Pancreas (tissue), 10 donors: ENCODE measurements at regions of chr3 and their contacts with region 1.

Region 1: GRCh38 chr3:155173386-155174170 is 93.5 kb downstream of the MME start:
- DNase-seq: no peak
- ATAC-seq: no peak
- H3K4me3 ChIP-seq: no peak overlapping the region
- H3K27ac ChIP-seq: no peak overlapping the region
- H3K4me1 ChIP-seq: no peaks in the 10 kb centered on the region
- H3K27me3 ChIP-seq: no peaks in the 10 kb centered on the region
- CTCF ChIP-seq: no peak

Region 2: GRCh38 chr3:154919226-154919625 is 254.4 kb before region 1 on chr3:
- intact Hi-C with region 1: no loop called
- DNase-seq: no peak
- ATAC-seq: no peak
- H3K4me3 ChIP-seq: no peak overlapping the region
- H3K27ac ChIP-seq: no peak overlapping the region
- H3K4me1 ChIP-seq: no peaks in the 10 kb centered on the region
- H3K27me3 ChIP-seq: no peaks in the 10 kb centered on the region
- CTCF ChIP-seq: no peak

Region 3: DNA sequence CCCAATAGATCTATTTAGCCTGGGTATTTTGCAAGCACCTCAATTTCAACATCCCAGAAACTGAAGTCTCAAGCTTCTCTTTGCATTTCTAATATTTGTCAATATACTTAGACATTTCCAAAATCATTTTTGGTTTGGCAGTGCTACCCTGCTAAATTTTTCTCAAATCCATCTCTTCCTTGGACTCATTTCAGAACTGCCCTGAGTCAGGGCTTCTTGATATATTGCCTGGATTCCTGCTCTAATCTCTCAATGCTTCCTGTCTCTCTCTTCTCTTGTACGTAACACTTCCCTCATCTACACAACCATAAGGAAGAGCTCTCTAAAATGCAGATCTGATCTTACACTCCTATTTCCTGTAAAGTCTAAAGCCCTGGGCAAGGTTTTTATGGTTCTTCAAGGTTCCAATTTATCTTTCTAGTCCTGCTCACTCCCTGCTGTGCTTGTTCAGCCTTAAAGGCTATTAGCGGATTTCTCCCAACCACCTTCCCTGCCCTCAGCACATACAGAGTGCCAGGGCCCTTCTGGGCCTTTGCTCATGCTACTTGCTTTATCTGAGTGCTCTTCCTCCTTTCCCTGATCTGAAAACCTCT is 146.5 kb before region 1 on chr3:
- intact Hi-C with region 1: no loop called
- DNase-seq: no peak
- ATAC-seq: peak in 1 of 4 donors; percentile 40
- H3K4me3 ChIP-seq: no peak overlapping the region
- H3K27ac ChIP-seq: no peak overlapping the region
- H3K4me1 ChIP-seq: no peaks in the 10 kb centered on the region
- H3K27me3 ChIP-seq: no peaks in the 10 kb centered on the region
- CTCF ChIP-seq: no peak

Region 4: DNA sequence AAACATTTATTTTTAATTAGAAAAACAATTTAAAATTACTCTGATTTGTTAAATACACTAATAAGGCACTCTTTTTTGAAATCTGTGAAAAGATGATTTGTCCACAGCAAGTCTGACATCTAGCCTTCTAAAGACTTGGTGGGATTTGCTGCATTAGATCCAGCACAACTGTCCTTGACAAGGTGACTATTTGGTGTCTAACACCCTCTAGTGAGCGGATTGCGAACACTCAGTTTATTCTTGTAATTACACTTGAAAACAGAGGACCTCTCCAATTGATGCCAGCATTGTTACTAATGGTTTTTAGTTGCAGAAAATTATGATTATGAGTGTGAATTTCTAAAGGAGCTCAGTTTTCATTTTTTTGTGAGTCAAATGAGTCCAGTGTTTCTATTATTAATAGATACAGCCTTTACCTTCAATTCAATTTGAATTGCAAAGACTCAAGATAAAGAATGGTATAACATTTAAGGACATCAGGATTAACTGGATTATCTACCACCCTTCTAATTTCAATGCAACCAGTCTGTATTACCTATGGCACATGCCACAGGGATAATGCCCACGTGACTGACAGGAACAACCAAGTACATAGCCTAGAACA is 149.6 kb after region 1 on chr3:
- intact Hi-C with region 1: loop called in 1 of 3 experiments (anchors 5 kb)
- DNase-seq: peak in 1 of 6 donors; percentile 49
- ATAC-seq: peak in 3 of 4 donors; percentile 78 to 88 (median 80)
- H3K4me3 ChIP-seq: no peak overlapping the region
- H3K27ac ChIP-seq: no peak overlapping the region
- H3K4me1 ChIP-seq: no peaks in the 10 kb centered on the region
- H3K27me3 ChIP-seq: no peaks in the 10 kb centered on the region
- CTCF ChIP-seq: peak in 2 of 4 donors; percentile 43 to 47